SK-N-SH (cell line): ENCODE measurements at regions of chr12 and their contacts with region 1.

Region 1: GRCh38 chr12:132012919-132013568 is 63.3 kb downstream of the EP400 start:
- DNase-seq: no peak
- H3K4me3 ChIP-seq: no peak overlapping the region
- H3K27ac ChIP-seq: no peak overlapping the region
- H3K4me1 ChIP-seq: 0 out of 4 replicates have a peak, but pooled peaks cover 0 to 4% of the 10 kb centered on the region in 2 experiments
- H3K27me3 ChIP-seq: no peaks in the 10 kb centered on the region
- CTCF ChIP-seq: no peak
- EP300 ChIP-seq: no peak
- RAD21 ChIP-seq: no peak

Region 2: GRCh38 chr12:131896080-131896810 is 116.8 kb before region 1 on chr12:
- CTCF ChIA-PET with region 1: no interaction called
- POLR2A ChIA-PET with region 1: no interaction called
- DNase-seq: peak; percentile 92
- H3K4me3 ChIP-seq: peak overlapping the region; percentile 62 to 72
- H3K27ac ChIP-seq: peak overlapping the region in 1 of 2 experiments; percentile 49; a peak in 2 of 4 replicates
- H3K4me1 ChIP-seq: peaks cover 7 to 23% of the 10 kb centered on the region in 2 experiments; a peak in 1 of 4 replicates
- H3K27me3 ChIP-seq: no peaks in the 10 kb centered on the region
- CTCF ChIP-seq: no peak
- EP300 ChIP-seq: peak in 1 of 2 experiments; percentile 17; a peak in 1 of 4 replicates
- RAD21 ChIP-seq: no peak

Region 3: DNA sequence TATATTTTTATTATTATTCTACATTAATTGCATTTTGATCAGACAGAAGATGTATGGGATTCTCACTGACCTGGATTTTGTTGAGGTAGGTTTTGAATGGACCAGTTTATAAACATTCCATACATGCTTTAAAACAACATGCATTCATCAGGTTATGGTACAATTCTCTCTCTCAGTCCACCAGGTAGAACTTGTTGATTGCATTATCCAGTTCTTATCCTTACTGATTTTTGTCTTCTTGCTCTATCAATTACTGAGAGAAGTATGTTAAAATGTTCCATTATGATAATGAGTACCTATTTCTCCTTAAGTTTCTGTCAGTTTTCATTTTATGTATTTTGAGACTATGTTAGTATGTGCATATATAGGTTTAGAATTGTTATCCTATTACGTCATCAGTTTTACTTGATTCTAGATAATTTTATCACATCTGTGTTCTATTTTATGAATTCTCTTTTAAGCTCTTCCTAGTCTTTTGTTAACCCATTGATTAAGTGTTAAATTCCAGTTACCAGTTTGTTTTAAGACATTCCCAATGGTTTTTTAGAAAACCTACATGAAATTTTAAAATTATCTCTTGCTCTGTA is 12.7 kb before region 1 on chr12:
- CTCF ChIA-PET with region 1: interaction called, 11 read pairs
- POLR2A ChIA-PET with region 1: no interaction called
- DNase-seq: no peak
- H3K4me3 ChIP-seq: no peak overlapping the region
- H3K27ac ChIP-seq: no peak overlapping the region
- H3K4me1 ChIP-seq: peaks cover 0 to 12% of the 10 kb centered on the region in 2 experiments; a peak in 2 of 4 replicates
- H3K27me3 ChIP-seq: no peaks in the 10 kb centered on the region
- CTCF ChIP-seq: no peak
- EP300 ChIP-seq: no peak
- RAD21 ChIP-seq: no peak

Region 4: GRCh38 chr12:132429946-132430643 is 417.1 kb after region 1 on chr12:
- CTCF ChIA-PET with region 1: no interaction called
- POLR2A ChIA-PET with region 1: no interaction called
- DNase-seq: no peak
- H3K4me3 ChIP-seq: no peak overlapping the region
- H3K27ac ChIP-seq: no peak overlapping the region
- H3K4me1 ChIP-seq: peaks cover 0 to 9% of the 10 kb centered on the region in 2 experiments; a peak in 1 of 4 replicates
- H3K27me3 ChIP-seq: no peaks in the 10 kb centered on the region; the same call in none of the 2 replicates
- CTCF ChIP-seq: no peak
- EP300 ChIP-seq: no peak
- RAD21 ChIP-seq: no peak